Activated naive CD4-positive, alpha-beta T cell treated with anti-CD3 and anti-CD28 coated beads for 36 hours (primary cell): ENCODE measurements at regions of chr11 and their contacts with region 1.

Region 1: GRCh38 chr11:20443596-20443995 is 56.1 kb downstream of the PRMT3 start:
- DNase-seq: no peak
- H3K4me3 Mint-ChIP-seq: no peak overlapping the region
- H3K27ac Mint-ChIP-seq: no peak overlapping the region
- H3K4me1 Mint-ChIP-seq: peaks cover 2% of the 10 kb centered on the region
- H3K27me3 Mint-ChIP-seq: no peaks in the 10 kb centered on the region

Region 2: GRCh38 chr11:20397281-20397680 is 46.3 kb before region 1 on chr11:
- CTCF ChIA-PET with region 1: no interaction called
- intact Hi-C with region 1: loop called (anchors 1 kb)
- DNase-seq: peak; percentile 23
- H3K4me3 Mint-ChIP-seq: no peak overlapping the region
- H3K27ac Mint-ChIP-seq: no peak overlapping the region
- H3K4me1 Mint-ChIP-seq: peaks cover 10% of the 10 kb centered on the region
- H3K27me3 Mint-ChIP-seq: no peaks in the 10 kb centered on the region

Region 3: GRCh38 chr11:20421946-20422345 is 21.6 kb before region 1 on chr11:
- CTCF ChIA-PET with region 1: interaction called, 4 read pairs
- intact Hi-C with region 1: loop called (anchors 2 kb)
- DNase-seq: no peak
- H3K4me3 Mint-ChIP-seq: no peak overlapping the region
- H3K27ac Mint-ChIP-seq: peak overlapping the region; percentile 61
- H3K4me1 Mint-ChIP-seq: peaks cover 17% of the 10 kb centered on the region
- H3K27me3 Mint-ChIP-seq: no peaks in the 10 kb centered on the region

Region 4: GRCh38 chr11:20459865-20460264 is 16.3 kb after region 1 on chr11:
- CTCF ChIA-PET with region 1: no interaction called
- intact Hi-C with region 1: no loop called
- DNase-seq: no peak
- H3K4me3 Mint-ChIP-seq: no peak overlapping the region
- H3K27ac Mint-ChIP-seq: no peak overlapping the region
- H3K4me1 Mint-ChIP-seq: no peaks in the 10 kb centered on the region
- H3K27me3 Mint-ChIP-seq: no peaks in the 10 kb centered on the region

Region 5: GRCh38 chr11:20501252-20501651 is 57.7 kb after region 1 on chr11:
- CTCF ChIA-PET with region 1: no interaction called
- intact Hi-C with region 1: no loop called
- DNase-seq: no peak
- H3K4me3 Mint-ChIP-seq: no peak overlapping the region
- H3K27ac Mint-ChIP-seq: no peak overlapping the region
- H3K4me1 Mint-ChIP-seq: peaks cover 2% of the 10 kb centered on the region
- H3K27me3 Mint-ChIP-seq: no peaks in the 10 kb centered on the region

Region 6: DNA sequence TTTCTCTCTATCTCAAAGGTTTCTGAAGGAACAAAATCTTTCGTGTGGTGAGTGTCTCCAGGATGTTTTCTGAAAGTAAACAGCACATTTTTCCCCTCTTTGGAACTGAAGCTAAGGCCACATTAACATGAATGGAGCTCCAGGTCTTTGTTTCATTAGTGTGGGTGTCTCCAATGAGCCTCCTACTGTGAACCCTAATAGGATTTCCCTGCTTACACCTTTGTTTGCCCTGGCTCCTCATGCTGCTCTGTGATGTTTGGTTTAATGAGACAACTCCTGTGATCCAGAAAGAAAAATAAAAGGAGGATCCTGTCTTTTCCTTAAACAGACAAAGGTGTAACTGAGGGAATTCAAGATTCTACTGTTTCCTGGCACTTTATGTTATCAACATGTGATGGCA is 78.9 kb after region 1 on chr11:
- CTCF ChIA-PET with region 1: no interaction called
- intact Hi-C with region 1: no loop called
- DNase-seq: no peak
- H3K4me3 Mint-ChIP-seq: no peak overlapping the region
- H3K27ac Mint-ChIP-seq: no peak overlapping the region
- H3K4me1 Mint-ChIP-seq: no peaks in the 10 kb centered on the region
- H3K27me3 Mint-ChIP-seq: peaks cover 14% of the 10 kb centered on the region

Region 7: DNA sequence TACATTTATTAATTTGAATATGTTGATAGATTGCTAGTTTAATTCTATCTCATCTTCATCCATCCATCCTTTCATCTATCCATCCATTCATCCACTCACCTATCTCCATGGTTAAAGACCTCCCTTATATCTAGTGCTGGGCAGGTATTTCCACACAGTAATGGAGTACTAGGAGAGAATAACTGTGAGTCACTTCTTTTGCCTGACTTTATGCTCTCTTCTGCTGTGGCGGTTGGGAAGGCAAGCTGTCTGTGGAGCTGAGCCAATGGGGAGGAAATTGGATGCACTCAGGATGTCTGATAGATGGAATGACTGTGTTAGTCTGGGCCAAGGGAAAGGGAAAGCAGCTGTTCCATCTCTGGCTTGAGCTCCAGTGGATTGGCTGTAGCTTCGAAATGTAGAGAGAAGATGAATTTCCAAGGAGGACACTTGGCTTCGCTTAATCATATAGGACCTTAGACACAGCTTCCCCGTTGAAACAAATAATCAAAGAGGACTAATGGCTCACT is 286.1 kb after region 1 on chr11:
- CTCF ChIA-PET with region 1: no interaction called
- intact Hi-C with region 1: no loop called
- DNase-seq: no peak
- H3K4me3 Mint-ChIP-seq: no peak overlapping the region
- H3K27ac Mint-ChIP-seq: no peak overlapping the region
- H3K4me1 Mint-ChIP-seq: no peaks in the 10 kb centered on the region
- H3K27me3 Mint-ChIP-seq: peaks cover 2% of the 10 kb centered on the region